Left ventricle myocardium superior (tissue), 1 donor: ENCODE measurements at regions of chr1 and their contacts with region 1.

Region 1: DNA sequence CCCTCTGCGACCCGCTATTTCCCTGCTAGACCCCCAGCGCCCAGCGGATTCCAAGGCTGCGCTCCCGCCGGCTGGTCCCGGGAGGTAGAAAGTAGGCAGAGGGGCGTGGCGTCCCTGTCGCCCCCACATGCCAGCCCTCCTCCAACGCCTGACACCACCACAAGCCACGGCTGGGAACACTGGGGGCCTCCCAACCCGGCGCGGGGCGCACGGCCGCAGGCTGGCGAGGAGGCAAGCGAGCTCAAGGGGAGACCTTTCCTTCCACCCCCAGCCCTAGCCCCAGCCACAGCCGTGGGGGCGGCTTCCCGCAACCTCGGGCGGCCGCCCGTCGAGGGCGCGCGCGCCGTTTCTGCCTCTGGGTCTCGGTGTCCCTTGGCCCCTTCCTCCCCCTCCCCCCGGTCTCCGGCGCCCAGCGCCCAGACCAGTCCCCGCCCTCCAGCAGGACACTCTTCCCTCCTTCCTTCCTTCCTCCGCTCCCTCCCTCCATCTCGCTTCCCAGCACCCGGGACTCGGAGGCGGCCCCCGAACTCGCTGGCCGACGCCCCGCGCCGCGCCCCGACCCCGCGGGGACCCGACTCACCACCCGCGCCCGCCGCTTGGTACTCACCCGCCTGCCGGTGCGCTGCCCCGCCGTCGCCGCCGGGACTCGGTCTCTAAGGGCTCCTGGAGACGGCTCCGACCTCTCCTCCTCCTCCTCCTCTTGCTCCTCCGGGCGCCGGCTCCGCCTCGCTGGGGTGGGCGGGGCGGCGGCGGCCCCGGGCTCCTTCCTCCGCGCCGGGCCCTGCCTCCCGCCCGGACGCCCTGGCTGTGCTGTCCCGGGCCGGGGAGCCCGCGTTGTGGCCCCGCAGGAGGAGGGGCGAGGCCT is at the start of gene GNG12:
- DNase-seq: peak; percentile 84
- ATAC-seq: peak; percentile 91
- total RNA-seq, gene GNG12: 34.1 TPM

Region 2: GRCh38 chr1:67777440-67777839 is 55.5 kb before region 1 on chr1:
- intact Hi-C with region 1: loop called (anchors 5 kb)
- DNase-seq: no peak
- ATAC-seq: no peak

Region 3: GRCh38 chr1:67897270-67897949 is 64.4 kb after region 1 on chr1:
- intact Hi-C with region 1: no loop called
- DNase-seq: no peak
- ATAC-seq: no peak